HEK293 (cell line): ENCODE measurements at regions of chr10 and their contacts with region 1.

Region 1: GRCh38 chr10:91298224-91298871 is 77.9 kb downstream of the PCGF5 start:
- H3K4me3 ChIP-seq: peak overlapping the region; percentile 12; the same call in 1 of the 2 replicates
- H3K27ac ChIP-seq: no peak overlapping the region
- H3K4me1 ChIP-seq: no peaks in the 10 kb centered on the region; the same call in 1 of the 2 replicates
- CTCF ChIP-seq: peak; percentile 92

Region 2: GRCh38 chr10:91284486-91285090 is 13.8 kb before region 1 on chr10:
- CTCF ChIA-PET with region 1: interaction called, 10 read pairs
- POLR2A ChIA-PET with region 1: no interaction called
- H3K4me3 ChIP-seq: no peak overlapping the region
- H3K27ac ChIP-seq: no peak overlapping the region
- H3K4me1 ChIP-seq: no peaks in the 10 kb centered on the region
- CTCF ChIP-seq: no peak

Region 3: DNA sequence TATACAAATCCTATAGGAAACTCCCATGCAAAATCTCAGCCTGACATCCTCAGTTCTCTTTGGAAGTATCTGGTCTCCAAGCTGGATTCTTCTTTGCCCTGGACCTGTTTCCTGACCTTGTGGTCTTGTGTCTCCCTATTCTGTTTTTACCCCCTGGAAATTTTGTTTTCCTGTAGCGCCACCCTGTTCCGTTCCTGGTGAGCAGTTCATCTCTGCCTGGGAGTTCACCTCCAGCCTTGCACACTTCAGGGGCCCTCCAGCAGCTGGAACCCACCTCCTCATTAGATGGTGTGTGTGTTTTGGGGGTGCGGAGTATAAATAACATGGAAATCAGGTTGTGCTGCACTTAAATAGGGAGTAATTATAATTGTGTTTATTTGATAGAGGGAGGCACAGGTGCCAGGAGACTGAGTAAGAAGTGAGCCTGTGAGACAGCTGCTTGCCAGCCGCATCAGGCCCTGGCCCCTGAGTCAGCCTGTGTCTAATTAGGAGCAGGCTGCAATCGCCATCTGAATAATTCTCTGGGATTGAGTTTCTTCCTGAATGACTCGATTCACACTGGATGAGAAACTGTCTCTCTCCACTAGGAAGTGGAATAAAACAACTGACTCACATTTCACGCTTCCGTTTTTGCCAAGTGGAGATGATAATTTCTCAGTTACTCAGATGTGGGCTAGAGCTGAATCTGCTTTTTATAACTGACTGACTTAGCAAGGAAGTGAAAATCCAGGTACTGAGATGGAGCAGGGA is 42.4 kb after region 1 on chr10:
- CTCF ChIA-PET with region 1: interaction called, 12 read pairs
- POLR2A ChIA-PET with region 1: no interaction called
- H3K4me3 ChIP-seq: no peak overlapping the region
- H3K27ac ChIP-seq: no peak overlapping the region; the same call in 1 of the 2 replicates
- H3K4me1 ChIP-seq: peaks cover 2% of the 10 kb centered on the region; the same call in 1 of the 2 replicates
- CTCF ChIP-seq: no peak

Region 4: DNA sequence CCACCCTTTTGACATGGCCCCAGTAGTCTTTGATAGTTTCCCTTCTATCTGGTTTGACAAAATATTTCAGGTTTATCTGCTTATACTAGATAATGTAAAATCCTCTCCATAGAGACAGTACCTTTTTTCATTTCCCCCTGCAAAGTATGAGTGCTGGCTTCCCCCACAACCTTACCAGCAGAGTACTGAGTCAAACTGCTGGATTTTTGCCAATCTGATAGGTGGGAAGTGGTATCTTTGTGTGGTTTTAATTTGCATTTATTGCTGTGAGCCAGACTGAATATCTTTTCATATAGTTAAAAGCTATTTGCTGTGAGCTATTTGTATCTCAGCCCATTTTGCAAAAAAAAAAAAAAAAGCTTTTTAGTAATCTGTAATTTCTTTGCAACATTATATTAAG is 79.7 kb after region 1 on chr10:
- CTCF ChIA-PET with region 1: interaction called, 14 read pairs
- POLR2A ChIA-PET with region 1: interaction called, 4 read pairs
- H3K4me3 ChIP-seq: no peak overlapping the region
- H3K27ac ChIP-seq: no peak overlapping the region
- H3K4me1 ChIP-seq: peaks cover 12% of the 10 kb centered on the region
- CTCF ChIP-seq: no peak

Region 5: DNA sequence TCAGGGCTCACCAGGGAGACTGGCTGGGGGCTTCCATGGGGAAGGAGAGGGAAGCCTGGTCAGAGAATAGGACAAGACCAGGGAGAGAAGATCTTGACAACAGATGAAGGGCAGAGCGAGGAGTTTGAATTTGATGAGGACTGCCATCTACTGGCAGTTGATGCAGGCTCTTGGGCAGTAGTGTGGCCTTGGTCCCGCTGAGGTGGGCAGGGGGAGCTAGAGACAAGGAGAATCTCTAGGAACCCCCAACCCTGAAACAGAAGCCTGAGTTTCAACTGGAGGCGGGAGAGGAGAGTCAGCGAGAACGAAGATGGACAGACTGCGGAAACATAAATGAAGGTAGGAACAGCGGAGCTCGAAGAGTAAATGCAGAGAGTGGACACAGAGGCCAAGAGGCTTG is 253.5 kb after region 1 on chr10:
- CTCF ChIA-PET with region 1: interaction called, 12 read pairs
- POLR2A ChIA-PET with region 1: no interaction called
- H3K4me3 ChIP-seq: no peak overlapping the region
- H3K27ac ChIP-seq: no peak overlapping the region
- H3K4me1 ChIP-seq: no peaks in the 10 kb centered on the region
- CTCF ChIP-seq: peak; percentile 92

Region 6: DNA sequence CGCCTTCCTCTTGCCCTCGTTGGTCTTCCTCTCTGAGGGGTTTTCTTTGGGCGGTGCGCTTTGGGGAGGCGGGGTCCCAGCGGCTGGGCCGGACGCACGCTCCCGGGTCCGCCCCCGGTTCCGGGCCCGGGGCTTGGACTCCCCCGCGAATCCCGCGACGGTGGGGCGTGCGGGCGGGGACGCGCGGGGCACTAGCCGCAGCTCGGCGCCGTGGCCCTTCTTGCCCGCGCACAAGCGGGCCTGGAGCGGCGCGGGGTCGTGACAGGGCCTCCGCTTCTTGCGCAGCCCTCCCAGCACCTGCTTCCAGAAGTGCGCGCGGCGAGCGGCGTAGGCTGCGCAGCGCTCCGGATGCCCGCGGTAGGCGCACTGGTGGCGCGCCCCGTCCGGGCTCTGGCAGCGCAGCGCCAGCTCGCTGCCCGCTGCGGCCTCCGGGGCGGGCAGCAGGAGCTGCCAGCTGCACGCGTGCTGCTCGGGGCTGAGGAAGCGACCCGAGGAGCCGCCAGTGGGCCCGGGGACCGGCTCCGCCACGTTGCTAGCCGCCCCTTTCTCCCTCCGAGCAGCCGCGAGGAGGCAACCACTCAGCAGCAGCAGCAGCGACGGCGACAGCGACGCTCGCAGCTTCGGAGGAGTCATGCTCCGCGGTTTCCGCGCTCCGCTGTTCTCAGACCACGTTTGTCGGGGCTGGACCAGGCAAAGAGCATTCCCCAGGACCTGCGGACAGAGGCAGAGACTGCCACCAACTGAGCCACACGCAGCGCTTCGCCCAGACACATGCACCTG is 610.2 kb after region 1 on chr10:
- CTCF ChIA-PET with region 1: interaction called, 24 read pairs
- POLR2A ChIA-PET with region 1: no interaction called
- H3K4me3 ChIP-seq: peak overlapping the region; percentile 56
- H3K27ac ChIP-seq: peak overlapping the region; percentile 79; the same call in 1 of the 2 replicates
- H3K4me1 ChIP-seq: peaks cover 2% of the 10 kb centered on the region; the same call in 1 of the 2 replicates
- CTCF ChIP-seq: peak; percentile 99